Dendritic cell treated with granulocyte-macrophage colony-stimulating factor and Interleukin-4, amounts not matched to agents 40 ng/mL and 50 ng/mL, for 4 days (primary cell): ENCODE measurements at regions of chr2 and their contacts with region 1.

Region 1: DNA sequence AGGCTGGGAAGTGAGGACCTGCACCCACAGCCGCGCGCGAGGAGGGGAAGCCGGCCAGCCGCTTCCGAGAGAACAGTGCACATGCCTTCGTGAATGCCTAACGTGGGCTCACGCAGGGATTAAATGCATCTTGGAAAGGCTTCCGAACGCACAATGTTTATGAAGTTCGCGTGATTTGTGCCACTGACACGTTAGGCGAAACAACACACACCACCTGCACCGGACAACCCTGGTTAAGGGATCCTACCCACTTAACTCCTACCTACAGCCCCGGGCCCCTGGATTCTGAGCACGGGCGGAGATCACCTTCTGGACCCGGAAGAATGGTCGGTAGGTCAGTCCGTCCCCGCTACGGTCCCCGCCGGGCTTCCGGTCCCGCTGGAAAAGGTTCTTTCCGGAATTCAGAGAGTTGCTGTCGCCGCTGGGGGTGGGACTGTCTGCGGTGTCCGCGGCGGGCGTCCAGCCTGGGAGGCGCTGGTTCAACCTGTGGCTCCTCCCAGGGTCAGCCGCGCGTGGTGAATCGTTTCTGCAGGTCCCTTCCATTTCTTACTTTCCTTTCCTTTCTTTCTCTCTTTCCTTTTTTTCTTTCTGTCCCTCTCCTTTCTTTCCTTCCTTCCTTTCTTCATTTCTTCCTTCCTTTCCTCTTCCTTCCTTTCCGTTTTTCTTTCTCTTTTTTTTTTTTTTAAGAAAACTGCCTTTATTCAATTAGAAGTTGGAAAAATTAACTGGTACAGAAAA is at the start of gene MTIF2:
- H3K4me3 Mint-ChIP-seq: peak within 1 kb of the TSS; percentile 93
- H3K27ac Mint-ChIP-seq: peak within 1 kb of the TSS; percentile 96
- H3K4me1 Mint-ChIP-seq: peaks cover 5% of the 10 kb centered on the region
- H3K27me3 Mint-ChIP-seq: no peaks in the 10 kb centered on the region

Region 2: GRCh38 chr2:55232084-55232862 is 36.8 kb before region 1 on chr2 and contains the starts of genes CLHC1 and RPS27A:
- intact Hi-C with region 1: loop called (anchors 5 kb)
- H3K4me3 Mint-ChIP-seq: peak within 1 kb of the TSS; percentile 99
- H3K27ac Mint-ChIP-seq: peak within 1 kb of the TSS; percentile 97
- H3K4me1 Mint-ChIP-seq: peaks cover 47% of the 10 kb centered on the region
- H3K27me3 Mint-ChIP-seq: no peaks in the 10 kb centered on the region

Region 3: GRCh38 chr2:55282110-55282917 is 13.2 kb after region 1 on chr2:
- intact Hi-C with region 1: loop called (anchors 1 kb)
- H3K4me3 Mint-ChIP-seq: peak overlapping the region; percentile 80
- H3K27ac Mint-ChIP-seq: peak overlapping the region; percentile 97
- H3K4me1 Mint-ChIP-seq: peaks cover 6% of the 10 kb centered on the region
- H3K27me3 Mint-ChIP-seq: no peaks in the 10 kb centered on the region

Region 4: GRCh38 chr2:55718165-55719008 is 449.3 kb after region 1 on chr2:
- intact Hi-C with region 1: no loop called
- H3K4me3 Mint-ChIP-seq: no peak overlapping the region
- H3K27ac Mint-ChIP-seq: no peak overlapping the region
- H3K4me1 Mint-ChIP-seq: peaks cover 2% of the 10 kb centered on the region
- H3K27me3 Mint-ChIP-seq: no peaks in the 10 kb centered on the region